Activated CD8-positive, alpha-beta T cell treated with anti-CD3 and anti-CD28 coated beads, Interleukin-2, amount 10 ng/mL, durations not matched to agents 7 days and 5 days (primary cell): ENCODE measurements at regions of chr11 and their contacts with region 1.

Region 1: DNA sequence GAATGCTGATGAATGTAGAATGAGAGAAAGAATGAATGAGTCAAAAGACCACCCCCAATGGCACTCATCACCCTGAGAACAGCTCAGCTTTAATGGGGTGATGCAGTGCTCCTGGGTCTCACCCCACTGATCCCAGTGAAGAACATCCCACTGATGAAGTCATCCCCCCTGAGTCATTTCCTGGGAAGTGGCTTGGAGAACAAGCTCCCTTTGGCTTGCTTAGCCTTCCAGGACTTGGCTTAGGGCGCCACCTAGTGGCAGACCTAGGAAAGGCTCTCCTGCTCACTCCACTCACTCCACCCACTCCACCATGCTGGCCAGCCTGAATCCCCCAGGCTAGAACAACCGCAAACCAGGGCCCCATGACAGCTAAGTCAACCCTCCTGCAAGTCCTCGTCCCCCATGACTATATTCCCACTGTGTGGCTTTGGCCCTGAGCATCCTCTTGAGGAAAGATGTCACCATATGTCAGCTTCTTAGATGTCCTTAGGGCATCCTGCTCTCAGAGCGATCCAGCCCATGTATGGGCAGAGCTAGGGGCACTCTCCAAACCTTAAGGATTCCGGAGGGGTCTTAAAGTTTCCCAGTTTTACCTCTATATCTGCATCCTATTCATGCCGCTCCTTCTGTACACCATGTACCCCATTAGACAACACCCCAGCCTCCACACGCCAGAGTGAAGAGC is 17.8 kb upstream of the TMPRSS13 start:
- DNase-seq: peak; percentile 89
- ATAC-seq: peak; percentile 34
- H3K4me3 Mint-ChIP-seq: no peak overlapping the region
- H3K27ac Mint-ChIP-seq: peak overlapping the region; percentile 76
- H3K4me1 Mint-ChIP-seq: peaks cover 90% of the 10 kb centered on the region
- H3K27me3 Mint-ChIP-seq: no peaks in the 10 kb centered on the region

Region 2: GRCh38 chr11:117702965-117703598 is 243.9 kb before region 1 on chr11:
- CTCF ChIA-PET with region 1: no interaction called
- POLR2A ChIA-PET with region 1: no interaction called
- DNase-seq: no peak
- ATAC-seq: no peak
- H3K4me3 Mint-ChIP-seq: no peak overlapping the region
- H3K27ac Mint-ChIP-seq: no peak overlapping the region
- H3K4me1 Mint-ChIP-seq: peaks cover 9% of the 10 kb centered on the region
- H3K27me3 Mint-ChIP-seq: peaks cover 12% of the 10 kb centered on the region

Region 3: GRCh38 chr11:117817368-117818040 is 129.5 kb before region 1 on chr11:
- CTCF ChIA-PET with region 1: interaction called, 436 read pairs
- POLR2A ChIA-PET with region 1: interaction called, 28 read pairs
- DNase-seq: peak; percentile 92
- ATAC-seq: peak; percentile 31
- H3K4me3 Mint-ChIP-seq: peak overlapping the region; percentile 47
- H3K27ac Mint-ChIP-seq: peak overlapping the region; percentile 95
- H3K4me1 Mint-ChIP-seq: peaks cover 81% of the 10 kb centered on the region
- H3K27me3 Mint-ChIP-seq: no peaks in the 10 kb centered on the region

Region 4: DNA sequence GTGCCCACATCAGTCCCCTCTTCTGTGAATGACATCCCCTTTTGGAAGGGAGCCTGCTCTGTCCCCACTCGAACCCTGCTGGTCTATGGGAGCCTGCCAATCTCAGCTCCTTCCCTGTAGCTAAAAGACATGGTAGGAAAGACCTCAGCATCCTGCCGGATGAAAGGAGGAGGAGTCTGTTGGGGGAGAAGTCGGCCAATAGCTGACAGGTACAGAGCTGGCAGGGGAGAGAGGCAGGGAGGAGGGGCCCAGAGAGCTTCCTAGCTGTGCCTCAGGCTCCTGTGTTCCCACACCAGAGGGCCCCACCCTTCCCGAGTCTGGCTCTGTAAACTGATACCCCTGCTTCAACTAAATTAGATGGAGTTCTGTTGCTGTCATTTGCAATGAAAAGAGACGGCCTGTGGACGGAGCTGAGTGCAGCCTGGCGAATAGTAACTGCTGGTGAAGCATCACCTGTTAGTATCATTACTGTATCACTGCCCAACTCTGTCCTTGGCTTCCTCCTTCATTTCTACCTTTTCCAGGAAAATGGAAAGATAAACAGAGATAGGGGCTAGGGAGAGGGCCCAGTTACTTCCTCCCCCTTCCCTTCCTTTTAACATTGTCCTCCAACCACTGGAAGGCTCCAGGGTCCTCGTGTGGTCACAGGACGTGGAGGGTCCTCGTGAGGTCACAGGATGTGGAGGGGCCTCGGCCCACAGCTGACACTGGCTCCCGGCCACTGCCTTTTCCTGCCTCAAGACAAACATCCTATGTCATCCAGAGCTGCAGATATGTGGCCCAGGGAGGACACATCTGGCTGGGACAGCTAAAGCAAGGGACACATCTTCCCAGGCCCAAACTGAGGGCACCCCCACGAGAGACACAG is 85.6 kb before region 1 on chr11:
- CTCF ChIA-PET with region 1: interaction called, 21 read pairs
- POLR2A ChIA-PET with region 1: no interaction called
- DNase-seq: peak; percentile 16
- ATAC-seq: no peak
- H3K4me3 Mint-ChIP-seq: no peak overlapping the region
- H3K27ac Mint-ChIP-seq: peak overlapping the region; percentile 53
- H3K4me1 Mint-ChIP-seq: peaks cover 22% of the 10 kb centered on the region
- H3K27me3 Mint-ChIP-seq: peaks cover 18% of the 10 kb centered on the region

Region 5: GRCh38 chr11:117932067-117932370 is 15.0 kb before region 1 on chr11:
- CTCF ChIA-PET with region 1: interaction called, 172 read pairs
- POLR2A ChIA-PET with region 1: interaction called, 6 read pairs
- DNase-seq: peak; percentile 47
- ATAC-seq: no peak
- H3K4me3 Mint-ChIP-seq: no peak overlapping the region
- H3K27ac Mint-ChIP-seq: peak overlapping the region; percentile 93
- H3K4me1 Mint-ChIP-seq: peaks cover 83% of the 10 kb centered on the region
- H3K27me3 Mint-ChIP-seq: no peaks in the 10 kb centered on the region

Region 6: DNA sequence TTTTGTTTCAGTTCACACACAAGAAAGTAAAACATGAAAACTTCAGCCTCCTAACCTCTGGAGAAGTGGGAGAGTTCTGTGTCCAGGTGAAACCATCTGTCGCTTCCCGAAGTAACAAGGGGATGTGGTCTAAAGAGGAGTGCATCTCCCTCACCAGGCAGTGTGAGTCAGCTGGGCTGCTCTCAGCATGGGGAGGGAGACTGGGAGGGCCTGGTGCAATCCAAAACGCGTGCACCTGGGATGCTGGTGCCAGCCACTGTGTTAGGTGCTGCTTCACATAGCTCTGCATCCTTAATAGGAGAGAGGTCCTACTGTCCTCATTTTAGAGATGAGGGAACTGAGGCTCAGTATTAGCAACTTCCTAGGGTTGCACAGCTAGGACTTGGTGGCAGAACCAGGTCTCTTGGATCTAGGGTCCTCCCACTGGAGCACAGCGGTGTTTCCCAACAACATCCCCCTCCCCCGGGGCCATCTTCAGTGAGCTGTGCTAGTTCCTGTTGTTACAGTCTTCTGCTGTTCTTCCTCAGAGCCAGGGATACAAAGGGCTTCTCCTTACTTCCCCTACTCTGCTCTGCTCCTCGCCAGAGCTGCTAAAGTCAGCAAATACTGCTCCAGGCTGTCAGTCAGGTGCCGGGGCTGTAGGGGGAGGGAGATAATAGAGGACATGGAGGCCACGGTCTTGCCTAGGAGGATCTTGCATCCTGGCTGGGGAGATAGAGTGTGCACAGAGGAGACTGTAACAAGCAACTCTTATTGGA is 47.2 kb after region 1 on chr11:
- CTCF ChIA-PET with region 1: interaction called, 93 read pairs
- POLR2A ChIA-PET with region 1: interaction called, 146 read pairs
- DNase-seq: no peak
- ATAC-seq: no peak
- H3K4me3 Mint-ChIP-seq: peak overlapping the region; percentile 69
- H3K27ac Mint-ChIP-seq: peak overlapping the region; percentile 53
- H3K4me1 Mint-ChIP-seq: peaks cover 97% of the 10 kb centered on the region
- H3K27me3 Mint-ChIP-seq: no peaks in the 10 kb centered on the region

Region 7: GRCh38 chr11:118051611-118052461 is 104.9 kb after region 1 on chr11:
- CTCF ChIA-PET with region 1: interaction called, 432 read pairs
- POLR2A ChIA-PET with region 1: interaction called, 31 read pairs
- DNase-seq: peak; percentile 86
- ATAC-seq: peak; percentile 91
- H3K4me3 Mint-ChIP-seq: peak overlapping the region; percentile 44
- H3K27ac Mint-ChIP-seq: peak overlapping the region; percentile 89
- H3K4me1 Mint-ChIP-seq: peaks cover 64% of the 10 kb centered on the region
- H3K27me3 Mint-ChIP-seq: peaks cover 2% of the 10 kb centered on the region